ENCODE measurements at regions of chr2 and their contacts with region 1.

Region 1: GRCh38 chr2:152620208-152620607 is 97.1 kb downstream of the PRPF40A start:
- DNase-seq: no peak
- H3K4me3 ChIP-seq: no peak overlapping the region
- H3K27ac ChIP-seq: no peak overlapping the region
- H3K4me1 ChIP-seq: no peaks in the 10 kb centered on the region
- H3K27me3 ChIP-seq: no peaks in the 10 kb centered on the region

Region 2: GRCh38 chr2:152189622-152190495 is 430.3 kb before region 1 on chr2:
- in situ Hi-C with region 1: loop called (anchors 5 kb)
- DNase-seq: peak; percentile 83
- H3K4me3 ChIP-seq: no peak overlapping the region
- H3K27ac ChIP-seq: no peak overlapping the region
- H3K4me1 ChIP-seq: 0 out of 2 replicates have a peak, but pooled peaks cover 3% of the 10 kb centered on the region
- H3K27me3 ChIP-seq: no peaks in the 10 kb centered on the region

Region 3: DNA sequence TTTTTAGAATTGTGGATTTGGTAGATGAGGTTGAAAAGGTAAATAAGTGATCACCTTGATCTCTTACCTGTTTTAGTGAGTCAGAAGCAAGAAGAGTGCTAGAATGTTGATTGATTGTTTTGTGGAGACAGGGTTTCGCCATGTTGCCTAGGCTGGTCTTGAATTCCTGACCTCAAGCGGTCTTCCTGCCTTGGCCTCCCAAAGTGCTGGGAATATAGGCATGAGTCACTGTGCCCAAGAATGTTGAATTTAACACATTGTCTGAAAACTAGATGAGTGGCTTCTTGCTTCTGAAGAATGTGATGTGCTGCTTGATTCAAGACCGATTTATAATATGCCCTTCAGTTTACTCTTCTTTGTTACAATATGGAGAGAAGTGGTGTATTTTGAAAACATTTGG is 163.9 kb before region 1 on chr2:
- in situ Hi-C with region 1: no loop called
- DNase-seq: peak; percentile 26
- H3K4me3 ChIP-seq: no peak overlapping the region
- H3K27ac ChIP-seq: no peak overlapping the region
- H3K4me1 ChIP-seq: peaks cover 8% of the 10 kb centered on the region; the same call in 1 of the 2 replicates
- H3K27me3 ChIP-seq: no peaks in the 10 kb centered on the region

Measured in GM23248 (cell line).